ENCODE measurements at regions of chr5 and their contacts with region 1.

Region 1: DNA sequence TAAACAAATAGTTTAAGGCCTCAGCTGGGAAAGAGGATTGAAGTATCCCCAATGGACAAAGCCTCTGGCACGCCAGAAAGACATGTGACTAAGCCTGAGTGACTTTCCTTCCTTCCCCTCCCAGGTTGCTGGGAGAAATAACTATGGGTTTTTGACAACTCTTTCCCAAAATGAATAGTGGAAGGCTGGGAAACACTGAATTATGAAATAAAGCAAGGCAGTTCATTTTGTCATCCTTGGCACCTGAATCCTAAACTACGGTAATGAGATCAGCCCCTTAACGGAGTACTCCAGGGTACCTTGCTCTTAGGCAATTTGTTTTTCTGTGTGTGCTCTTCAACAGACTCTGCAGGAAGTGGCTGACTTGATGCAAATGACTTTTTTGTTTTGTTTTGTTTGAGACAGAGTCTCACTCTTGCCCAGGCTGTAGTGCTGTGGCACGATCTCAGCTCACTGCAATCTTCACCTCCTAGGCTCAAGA is 75.2 kb downstream of the LMNB1 start:
- DNase-seq: peak in 1 of 2 donors; percentile 66
- ATAC-seq: peak; percentile 61 to 73 (median 72)
- H3K4me3 ChIP-seq: no peak overlapping the region
- H3K4me3 Mint-ChIP-seq: peak overlapping the region; percentile 77
- H3K27ac ChIP-seq: peak overlapping the region; percentile 79
- H3K27ac Mint-ChIP-seq: peak overlapping the region; percentile 94 to 95
- H3K4me1 ChIP-seq: peaks cover 26% of the 10 kb centered on the region
- H3K4me1 Mint-ChIP-seq: peaks cover 39% of the 10 kb centered on the region in 2 donors
- H3K27me3 ChIP-seq: no peaks in the 10 kb centered on the region
- H3K27me3 Mint-ChIP-seq: no peaks in the 10 kb centered on the region
- CTCF ChIP-seq: no peak

Region 2: DNA sequence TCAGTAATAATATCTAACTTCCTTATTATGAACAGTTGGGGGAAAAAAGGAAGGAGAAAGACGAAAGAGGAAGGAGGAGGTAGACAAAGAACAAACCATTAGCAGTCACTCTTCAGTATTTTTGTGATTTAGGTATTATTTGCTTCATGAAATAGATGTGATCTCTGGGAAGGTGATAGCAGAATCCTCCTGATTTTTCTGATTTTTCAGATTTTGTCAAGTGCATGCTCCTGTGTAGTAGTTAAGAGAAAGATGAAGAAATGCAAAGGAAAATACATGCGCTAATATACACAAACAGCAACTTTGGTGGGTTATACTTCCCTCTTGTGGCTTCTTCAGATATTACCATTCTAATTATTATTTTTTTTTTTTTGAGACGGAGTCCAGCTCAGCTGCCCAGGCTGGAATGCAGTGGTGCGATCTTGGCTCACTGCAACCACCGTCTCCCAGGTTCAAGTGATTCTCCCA is 43.6 kb before region 1 on chr5:
- intact Hi-C with region 1: loop called (anchors 2 kb)
- DNase-seq: peak in 1 of 2 donors; percentile 53
- ATAC-seq: no peak
- H3K4me3 ChIP-seq: no peak overlapping the region
- H3K4me3 Mint-ChIP-seq: no peak overlapping the region
- H3K27ac ChIP-seq: peak overlapping the region; percentile 4
- H3K27ac Mint-ChIP-seq: peak overlapping the region; percentile 94 to 95
- H3K4me1 ChIP-seq: peaks cover 20% of the 10 kb centered on the region
- H3K4me1 Mint-ChIP-seq: peaks cover 27 to 31% of the 10 kb centered on the region in 2 donors
- H3K27me3 ChIP-seq: no peaks in the 10 kb centered on the region
- H3K27me3 Mint-ChIP-seq: no peaks in the 10 kb centered on the region
- CTCF ChIP-seq: peak; percentile 63